Endothelial cell of umbilical vein (primary cell): ENCODE measurements at regions of chr3 and their contacts with region 1.

Region 1: DNA sequence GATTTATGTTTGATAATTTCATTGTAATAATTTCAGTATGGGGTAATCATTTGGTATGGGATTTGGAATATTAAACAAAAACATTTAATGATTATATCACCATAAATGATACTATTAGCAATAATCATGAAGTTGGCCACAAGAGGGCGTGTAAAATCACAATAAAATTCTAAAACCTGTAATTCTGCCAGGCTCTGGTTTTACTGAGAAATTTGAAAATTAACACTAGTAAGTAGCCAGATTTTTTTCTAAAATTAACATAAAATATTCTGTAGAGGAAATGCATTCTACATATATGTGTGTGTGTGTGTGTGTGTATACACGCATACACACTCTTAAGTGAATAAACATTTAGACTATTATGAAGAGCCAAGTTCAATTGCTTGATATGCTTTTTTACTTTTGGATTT is 40.5 kb downstream of the FEZF2 start:
- DNase-seq: peak; percentile 21
- H3K4me3 ChIP-seq: no peak overlapping the region
- H3K27ac ChIP-seq: no peak overlapping the region
- H3K4me1 ChIP-seq: no peaks in the 10 kb centered on the region
- H3K27me3 ChIP-seq: no peaks in the 10 kb centered on the region
- CTCF ChIP-seq: peak; percentile 24 to 40
- POLR2A ChIP-seq: no peak

Region 2: GRCh38 chr3:60445446-60445845 is 1887.4 kb before region 1 on chr3:
- CTCF ChIA-PET with region 1: no interaction called
- POLR2A ChIA-PET with region 1: no interaction called
- dilution Hi-C with region 1: no loop called
- intact Hi-C with region 1: no loop called
- DNase-seq: no peak
- H3K4me3 ChIP-seq: no peak overlapping the region
- H3K27ac ChIP-seq: no peak overlapping the region
- H3K4me1 ChIP-seq: no peaks in the 10 kb centered on the region
- H3K27me3 ChIP-seq: no peaks in the 10 kb centered on the region
- CTCF ChIP-seq: no peak
- POLR2A ChIP-seq: no peak

Region 3: GRCh38 chr3:63228087-63229023 is 895.5 kb after region 1 on chr3:
- CTCF ChIA-PET with region 1: interaction called, 5 read pairs
- POLR2A ChIA-PET with region 1: no interaction called
- dilution Hi-C with region 1: no loop called
- intact Hi-C with region 1: loop called (anchors 10 kb)
- DNase-seq: peak; percentile 13
- H3K4me3 ChIP-seq: no peak overlapping the region
- H3K27ac ChIP-seq: no peak overlapping the region
- H3K4me1 ChIP-seq: no peaks in the 10 kb centered on the region
- H3K27me3 ChIP-seq: no peaks in the 10 kb centered on the region
- CTCF ChIP-seq: peak; percentile 16 to 21
- POLR2A ChIP-seq: no peak